ENCODE measurements at regions of chr2 and their contacts with region 1.

Region 1: GRCh38 chr2:85888684-85889626 is at the start of gene ST3GAL5:
- DNase-seq: peak; percentile 94
- ATAC-seq: peak; percentile 80
- total RNA-seq, gene ST3GAL5: 6.8 TPM

Region 2: DNA sequence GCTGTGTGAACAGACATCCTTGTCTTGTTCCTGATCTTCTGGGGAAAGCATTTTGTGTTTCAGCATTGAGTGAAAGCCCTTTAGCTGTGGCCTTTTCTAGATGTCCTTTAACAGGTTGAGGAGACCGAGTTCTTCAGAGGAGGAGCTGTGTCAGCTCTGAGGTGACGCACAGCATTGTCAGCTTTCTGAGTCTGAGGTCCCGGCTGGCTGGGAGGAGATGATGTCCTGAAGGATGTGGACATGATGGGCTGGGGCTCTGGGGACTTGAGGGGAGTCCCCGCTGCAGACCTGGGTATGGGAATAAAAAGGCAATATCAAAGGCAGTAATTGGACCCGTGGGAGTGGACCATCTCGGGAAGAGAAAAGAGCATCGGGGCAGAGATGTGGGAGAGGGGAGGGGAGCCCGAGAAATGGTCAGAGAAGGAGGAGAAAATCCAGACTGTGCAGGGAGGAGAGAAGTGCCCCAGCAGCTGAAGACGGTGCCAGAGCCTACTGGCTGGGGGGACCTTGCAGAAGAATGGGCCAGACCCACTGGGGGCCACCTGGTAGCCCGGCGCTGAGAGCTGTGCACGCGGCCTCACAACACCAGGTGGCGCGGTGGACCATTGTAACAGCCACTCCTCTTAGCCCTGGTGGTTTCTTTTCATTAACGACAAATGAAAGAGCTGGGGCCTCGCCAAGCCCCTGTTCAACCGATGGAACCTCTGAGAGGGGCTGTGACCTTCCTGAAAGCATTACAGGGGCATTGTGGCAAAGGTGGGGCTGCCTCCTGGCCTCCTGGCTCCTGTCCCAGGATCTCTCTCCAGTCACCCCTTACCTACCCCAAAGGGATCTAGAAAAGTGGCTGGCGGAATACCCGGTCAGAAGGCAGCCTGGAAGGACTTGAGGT is 61.7 kb before region 1 on chr2:
- intact Hi-C with region 1: loop called (anchors 5 kb)
- DNase-seq: peak; percentile 88
- ATAC-seq: peak; percentile 92

Region 3: GRCh38 chr2:85924522-85924921 is 35.6 kb after region 1 on chr2:
- intact Hi-C with region 1: loop called (anchors 5 kb)
- DNase-seq: peak; percentile 79
- ATAC-seq: peak; percentile 89

Region 4: GRCh38 chr2:86035883-86036668 is 147.1 kb after region 1 on chr2:
- intact Hi-C with region 1: loop called (anchors 1 kb)
- DNase-seq: peak; percentile 92
- ATAC-seq: peak; percentile 86

Region 5: DNA sequence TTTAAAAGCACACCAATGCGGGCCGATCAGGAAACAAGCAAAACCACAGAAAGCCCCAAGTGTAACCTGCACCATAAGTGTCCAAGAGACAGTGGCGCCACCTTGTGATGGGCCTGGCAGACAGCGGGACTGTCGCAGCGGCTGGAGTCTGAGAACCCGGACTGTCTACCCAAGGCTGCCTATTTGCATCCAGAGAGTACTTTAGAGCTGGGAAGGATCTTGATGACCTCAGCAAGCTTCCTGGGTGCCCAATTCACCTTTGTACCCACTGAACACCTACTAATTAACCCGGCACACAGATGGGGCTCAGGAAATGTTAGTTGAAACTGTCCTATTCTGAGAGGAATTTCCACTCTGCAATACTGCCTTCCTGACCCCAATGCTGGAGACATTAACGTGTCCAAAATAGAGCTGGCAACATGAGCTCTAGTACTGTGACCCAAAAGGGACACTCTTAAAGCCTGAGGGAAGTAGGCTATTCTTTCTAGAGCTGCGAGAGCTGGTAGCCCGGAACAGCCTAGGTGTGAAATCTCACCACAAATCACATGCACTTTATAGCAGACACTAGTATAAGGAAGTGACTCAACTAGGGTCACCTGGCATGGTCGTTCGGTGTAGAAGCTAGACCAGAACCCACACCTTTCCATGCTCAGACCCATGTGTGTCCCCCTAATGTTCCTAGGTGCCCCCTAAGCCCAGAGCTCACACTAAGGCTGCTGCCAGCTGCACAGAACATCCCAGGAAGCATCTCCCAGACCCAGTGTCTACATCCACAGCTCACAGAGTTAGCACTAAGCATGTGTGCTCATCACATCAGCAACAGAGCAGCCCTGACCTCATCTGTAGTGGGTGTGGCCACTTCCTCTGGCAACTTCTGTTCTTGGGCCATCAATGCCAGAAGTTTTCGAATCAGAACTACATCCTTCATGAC is 191.3 kb after region 1 on chr2:
- intact Hi-C with region 1: loop called (anchors 2 kb)
- DNase-seq: peak; percentile 89
- ATAC-seq: peak; percentile 82

Measured in Right ventricle myocardium inferior (tissue), 1 donor.